GM12878 (cell line): ENCODE measurements at regions of chr9 and their contacts with region 1.

Region 1: DNA sequence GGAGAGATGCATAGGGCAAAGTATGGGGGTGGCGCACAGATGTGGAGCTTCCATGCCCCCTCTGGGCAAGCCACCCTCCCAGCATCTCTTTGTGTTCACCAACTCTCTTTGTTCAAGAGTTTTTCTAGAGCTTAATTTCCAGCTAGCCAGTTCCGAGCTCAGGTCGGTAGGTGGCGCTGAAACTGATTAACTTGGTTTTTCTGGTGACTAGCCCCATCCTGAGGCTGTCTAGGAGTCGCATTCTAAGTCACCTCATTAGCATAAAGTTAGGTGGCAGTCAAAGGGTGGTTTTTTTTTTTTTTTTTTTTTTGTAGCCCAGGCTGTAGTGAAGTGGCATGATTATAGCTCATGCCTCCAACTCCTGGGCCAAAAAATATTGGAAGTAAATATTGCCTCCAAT is 476.4 kb downstream of the KDM4C start:
- DNase-seq: no peak
- ATAC-seq: peak; percentile 80
- H3K4me3 ChIP-seq: no peak overlapping the region
- H3K27ac ChIP-seq: no peak overlapping the region
- H3K4me1 ChIP-seq: no peaks in the 10 kb centered on the region
- H3K27me3 ChIP-seq: no peaks in the 10 kb centered on the region
- CTCF ChIP-seq: peak; percentile 45 to 63 (median 52)
- EP300 ChIP-seq: no peak
- POLR2A ChIP-seq: no peak
- RAD21 ChIP-seq: peak; percentile 56

Region 2: DNA sequence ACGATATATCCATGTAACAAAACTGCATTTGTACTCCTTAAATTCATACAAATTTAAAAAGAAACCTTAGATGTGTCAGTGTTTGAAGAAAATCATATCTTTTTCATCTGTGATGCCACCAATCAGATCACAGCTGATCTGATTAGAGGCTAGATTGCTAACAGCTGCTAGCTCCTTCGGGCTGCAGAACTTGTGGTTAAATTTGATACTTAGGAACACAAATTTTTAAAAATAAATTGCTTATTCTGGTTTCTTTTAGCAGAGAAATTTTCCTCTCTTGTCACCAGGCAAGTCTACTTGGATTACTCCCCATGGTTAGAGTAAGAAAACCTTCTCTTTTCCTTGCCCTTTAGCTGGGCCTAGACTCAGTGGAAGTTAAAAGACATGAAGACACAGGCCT is 1124.2 kb before region 1 on chr9:
- CTCF ChIA-PET with region 1: no interaction called
- POLR2A ChIA-PET with region 1: no interaction called
- RAD21 ChIA-PET with region 1: no interaction called
- SMC1A ChIA-PET with region 1: no interaction called
- in situ Hi-C with region 1: no loop called
- intact Hi-C with region 1: no loop called
- DNase-seq: no peak
- ATAC-seq: no peak
- H3K4me3 ChIP-seq: no peak overlapping the region
- H3K27ac ChIP-seq: no peak overlapping the region
- H3K4me1 ChIP-seq: no peaks in the 10 kb centered on the region
- H3K27me3 ChIP-seq: no peaks in the 10 kb centered on the region
- CTCF ChIP-seq: no peak
- EP300 ChIP-seq: no peak
- POLR2A ChIP-seq: no peak
- RAD21 ChIP-seq: no peak

Region 3: DNA sequence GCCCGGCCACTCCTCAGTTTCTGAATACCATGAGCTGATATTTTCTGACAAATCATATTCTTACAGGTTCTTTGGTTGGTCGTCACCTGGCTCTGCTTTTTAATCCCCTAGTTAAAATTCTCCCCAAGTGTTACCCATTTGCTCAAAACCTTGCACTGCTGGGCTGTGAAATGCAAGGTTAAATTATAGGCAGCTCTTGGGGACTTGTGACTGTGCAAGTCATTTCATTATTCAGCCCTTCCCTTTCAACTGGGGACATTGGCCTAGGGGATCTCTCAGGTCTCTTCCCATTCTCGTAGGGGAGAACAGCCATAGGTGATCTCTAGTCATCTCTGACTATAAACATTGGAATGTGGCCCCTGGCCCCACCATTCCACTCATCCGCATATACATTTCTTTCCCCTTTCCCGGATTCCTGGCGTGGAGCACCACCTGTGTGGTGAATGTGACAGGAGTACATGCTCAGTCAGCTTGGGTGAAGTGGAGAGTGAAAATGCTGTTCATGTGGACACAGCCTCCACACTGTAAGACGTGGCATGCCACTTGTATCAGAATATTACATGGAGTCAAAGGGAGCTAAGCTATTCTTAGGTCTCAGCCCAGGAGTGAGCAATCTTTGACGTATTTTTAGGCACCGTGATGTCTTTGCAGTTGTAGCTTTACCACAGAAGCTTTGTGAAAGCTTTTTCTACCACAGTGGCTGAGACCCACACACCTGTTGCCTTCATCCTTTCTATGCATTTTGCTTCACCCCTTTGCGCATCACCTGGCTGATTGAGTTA is 89.7 kb before region 1 on chr9:
- CTCF ChIA-PET with region 1: no interaction called
- POLR2A ChIA-PET with region 1: no interaction called
- RAD21 ChIA-PET with region 1: no interaction called
- SMC1A ChIA-PET with region 1: no interaction called
- in situ Hi-C with region 1: no loop called
- intact Hi-C with region 1: no loop called
- DNase-seq: no peak
- ATAC-seq: no peak
- H3K4me3 ChIP-seq: no peak overlapping the region
- H3K27ac ChIP-seq: no peak overlapping the region
- H3K4me1 ChIP-seq: no peaks in the 10 kb centered on the region
- H3K27me3 ChIP-seq: no peaks in the 10 kb centered on the region
- CTCF ChIP-seq: no peak
- EP300 ChIP-seq: no peak
- POLR2A ChIP-seq: no peak
- RAD21 ChIP-seq: no peak

Region 4: GRCh38 chr9:7358876-7359275 is 124.7 kb after region 1 on chr9:
- CTCF ChIA-PET with region 1: interaction called, 12 read pairs
- POLR2A ChIA-PET with region 1: interaction called, 3 read pairs
- RAD21 ChIA-PET with region 1: interaction called, 6 read pairs
- SMC1A ChIA-PET with region 1: interaction called, 4 read pairs
- in situ Hi-C with region 1: no loop called
- intact Hi-C with region 1: no loop called
- DNase-seq: no peak
- ATAC-seq: no peak
- H3K4me3 ChIP-seq: no peak overlapping the region
- H3K27ac ChIP-seq: no peak overlapping the region
- H3K4me1 ChIP-seq: no peaks in the 10 kb centered on the region
- H3K27me3 ChIP-seq: peaks cover 0 to 5% of the 10 kb centered on the region in 2 experiments; a peak in 1 of 4 replicates
- CTCF ChIP-seq: no peak
- EP300 ChIP-seq: no peak
- POLR2A ChIP-seq: no peak
- RAD21 ChIP-seq: no peak